Endothelial cell of umbilical vein (primary cell): ENCODE measurements at regions of chr12 and their contacts with region 1.

Region 1: DNA sequence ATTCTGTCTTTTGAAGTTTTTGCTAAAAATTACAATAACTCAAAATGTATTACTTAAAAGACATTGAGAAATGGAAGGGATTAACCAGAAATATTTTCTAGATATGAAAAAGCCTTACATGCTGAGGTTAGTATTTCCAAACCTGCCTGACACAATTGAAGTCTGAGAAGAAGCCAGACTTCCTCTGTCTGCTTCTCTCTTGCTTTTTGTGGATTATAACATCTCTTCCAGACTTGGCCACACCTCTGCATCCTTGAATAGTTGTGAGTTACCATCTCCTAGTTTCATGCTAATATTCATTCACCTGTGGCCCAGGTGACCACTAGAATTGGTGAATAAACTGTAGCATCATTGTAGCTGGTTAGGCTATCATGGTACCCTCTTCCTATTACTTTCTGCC is 497.6 kb downstream of the SLC16A7 start:
- DNase-seq: no peak
- H3K4me3 ChIP-seq: no peak overlapping the region
- H3K27ac ChIP-seq: no peak overlapping the region
- H3K4me1 ChIP-seq: no peaks in the 10 kb centered on the region
- H3K27me3 ChIP-seq: no peaks in the 10 kb centered on the region
- CTCF ChIP-seq: no peak
- POLR2A ChIP-seq: no peak

Region 2: DNA sequence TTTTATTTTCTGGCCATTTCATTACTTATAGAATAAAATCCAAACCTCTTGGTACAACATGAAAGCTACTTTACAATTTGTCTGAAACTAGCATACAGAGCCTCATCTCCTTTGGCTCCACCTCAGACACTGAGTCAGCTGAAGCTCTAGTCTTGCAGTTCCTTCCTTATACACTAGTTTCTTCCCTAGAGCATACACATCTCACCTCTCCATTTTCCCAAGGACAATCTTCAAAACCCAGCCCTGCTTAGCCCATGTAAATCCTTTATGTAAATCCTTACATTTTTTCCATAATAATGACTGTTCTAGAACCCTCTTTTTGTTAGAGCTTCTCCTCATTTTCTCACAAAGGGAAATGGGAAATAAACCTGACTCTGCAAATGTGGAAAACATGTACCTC is 34.2 kb before region 1 on chr12:
- CTCF ChIA-PET with region 1: no interaction called
- POLR2A ChIA-PET with region 1: no interaction called
- dilution Hi-C with region 1: no loop called
- intact Hi-C with region 1: loop called (anchors 2 kb)
- DNase-seq: no peak
- H3K4me3 ChIP-seq: no peak overlapping the region
- H3K27ac ChIP-seq: no peak overlapping the region
- H3K4me1 ChIP-seq: no peaks in the 10 kb centered on the region
- H3K27me3 ChIP-seq: no peaks in the 10 kb centered on the region
- CTCF ChIP-seq: no peak
- POLR2A ChIP-seq: no peak